HEK293 (cell line): ENCODE measurements at regions of chr9 and their contacts with region 1.

Region 1: GRCh38 chr9:129835021-129835871 is at the starts of genes C9orf78 and USP20:
- H3K4me3 ChIP-seq: peak within 1 kb of the TSS; percentile 63
- H3K27ac ChIP-seq: peak within 1 kb of the TSS; percentile 4; the same call in 1 of the 2 replicates
- H3K4me1 ChIP-seq: peaks cover 4% of the 10 kb centered on the region; the same call in 1 of the 2 replicates
- CTCF ChIP-seq: peak; percentile 35; the same call in 1 of the 2 replicates

Region 2: GRCh38 chr9:129823935-129824601 is 11.2 kb before region 1 on chr9 and contains the start of gene TOR1A:
- CTCF ChIA-PET with region 1: no interaction called
- POLR2A ChIA-PET with region 1: interaction called, 36 read pairs
- H3K4me3 ChIP-seq: peak within 1 kb of the TSS; percentile 98
- H3K27ac ChIP-seq: peak within 1 kb of the TSS; percentile 88
- H3K4me1 ChIP-seq: no peaks in the 10 kb centered on the region
- CTCF ChIP-seq: no peak